WTC11 (cell line): ENCODE measurements at regions of chr11 and their contacts with region 1.

Region 1: DNA sequence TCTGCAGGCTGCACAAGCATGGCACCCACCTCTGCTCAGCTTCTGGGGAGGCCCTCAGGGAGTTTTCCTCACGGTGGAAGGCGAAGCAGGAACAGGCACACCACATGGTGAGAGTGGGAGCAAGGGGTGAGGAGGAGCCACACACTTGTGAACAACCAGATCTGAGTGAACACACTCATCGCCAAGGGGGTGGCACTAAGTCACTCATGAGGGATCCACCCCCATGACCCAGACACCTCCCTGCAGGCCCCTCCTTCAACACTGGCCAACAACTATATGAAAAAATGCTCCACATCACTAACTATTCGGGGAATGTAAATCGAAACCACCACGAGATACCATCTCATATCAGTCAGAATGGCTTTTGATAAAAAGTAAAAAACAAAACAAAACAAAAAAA is 722 bp upstream of the KRTAP5-2 start:
- DNase-seq: no peak
- ATAC-seq: no peak
- H3K4me3 Mint-ChIP-seq: no peak overlapping the region
- H3K27ac Mint-ChIP-seq: no peak overlapping the region
- H3K4me1 Mint-ChIP-seq: peaks cover 35% of the 10 kb centered on the region
- H3K27me3 Mint-ChIP-seq: peaks cover 57% of the 10 kb centered on the region
- CTCF ChIP-seq: no peak

Region 2: GRCh38 chr11:1553808-1554594 is 44.8 kb before region 1 on chr11:
- CTCF ChIA-PET with region 1: interaction called, 29 read pairs
- POLR2A ChIA-PET with region 1: interaction called, 7 read pairs
- DNase-seq: peak; percentile 82
- ATAC-seq: peak; percentile 90
- H3K4me3 Mint-ChIP-seq: no peak overlapping the region
- H3K27ac Mint-ChIP-seq: no peak overlapping the region
- H3K4me1 Mint-ChIP-seq: peaks cover 21% of the 10 kb centered on the region
- H3K27me3 Mint-ChIP-seq: peaks cover 78% of the 10 kb centered on the region
- CTCF ChIP-seq: no peak

Region 3: DNA sequence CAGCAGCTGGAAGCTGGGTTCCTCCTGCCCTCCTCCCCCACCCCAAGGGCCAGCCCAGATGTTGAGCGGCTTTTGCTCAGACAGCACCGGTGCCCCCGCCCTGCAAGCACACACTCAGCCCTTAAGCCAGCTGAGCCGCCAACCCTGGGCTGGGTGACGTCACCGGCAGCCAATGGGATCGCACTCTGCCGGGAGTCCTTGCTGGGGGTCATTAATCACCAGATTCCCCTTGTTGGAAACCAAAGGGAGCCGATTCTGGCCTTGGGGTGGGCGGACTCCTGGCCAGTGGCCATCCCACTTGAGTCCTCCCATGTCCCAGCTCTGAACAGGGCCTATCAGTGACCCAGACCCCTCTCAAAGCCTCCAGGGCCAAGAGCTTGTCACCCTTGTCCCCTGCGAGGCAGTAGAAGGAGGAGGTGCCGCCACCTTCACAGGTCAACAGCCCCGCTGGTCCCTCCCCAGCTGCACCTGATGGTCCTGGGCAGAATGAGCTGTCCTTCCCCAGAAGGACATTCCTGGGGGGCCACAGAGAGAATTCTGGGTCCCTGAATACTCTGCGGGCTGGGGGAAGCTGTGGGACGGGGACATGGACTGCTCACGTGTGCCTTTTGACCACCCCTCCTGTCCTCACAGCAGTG is 34.2 kb before region 1 on chr11:
- CTCF ChIA-PET with region 1: interaction called, 11 read pairs
- POLR2A ChIA-PET with region 1: no interaction called
- DNase-seq: peak; percentile 80
- ATAC-seq: peak; percentile 70
- H3K4me3 Mint-ChIP-seq: no peak overlapping the region
- H3K27ac Mint-ChIP-seq: no peak overlapping the region
- H3K4me1 Mint-ChIP-seq: peaks cover 13% of the 10 kb centered on the region
- H3K27me3 Mint-ChIP-seq: peaks cover 26% of the 10 kb centered on the region
- CTCF ChIP-seq: no peak

Region 4: DNA sequence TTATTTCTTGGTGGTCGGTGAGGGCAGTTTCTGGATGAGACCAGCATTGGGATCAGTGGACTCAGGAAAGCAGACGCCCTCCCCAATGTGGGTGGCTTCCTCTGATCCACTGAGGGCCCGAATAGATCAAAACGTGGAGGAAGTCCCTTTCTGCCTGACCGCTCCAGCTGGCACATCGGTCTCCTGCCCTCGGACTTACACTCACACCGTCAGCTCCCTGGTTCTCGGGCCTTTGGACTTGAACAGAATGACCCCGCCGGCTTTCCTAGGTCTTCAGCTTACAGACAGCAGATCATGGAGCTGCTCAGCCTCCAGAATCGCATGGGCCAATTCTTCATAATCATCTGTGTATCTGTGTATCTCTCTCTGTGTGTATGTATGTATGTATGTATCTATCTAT is 14.7 kb after region 1 on chr11:
- CTCF ChIA-PET with region 1: interaction called, 17 read pairs
- POLR2A ChIA-PET with region 1: no interaction called
- DNase-seq: no peak
- ATAC-seq: no peak
- H3K4me3 Mint-ChIP-seq: no peak overlapping the region
- H3K27ac Mint-ChIP-seq: no peak overlapping the region
- H3K4me1 Mint-ChIP-seq: 0 out of 2 replicates have a peak, but pooled peaks cover 2% of the 10 kb centered on the region
- H3K27me3 Mint-ChIP-seq: peaks cover 34% of the 10 kb centered on the region
- CTCF ChIP-seq: no peak

Region 5: DNA sequence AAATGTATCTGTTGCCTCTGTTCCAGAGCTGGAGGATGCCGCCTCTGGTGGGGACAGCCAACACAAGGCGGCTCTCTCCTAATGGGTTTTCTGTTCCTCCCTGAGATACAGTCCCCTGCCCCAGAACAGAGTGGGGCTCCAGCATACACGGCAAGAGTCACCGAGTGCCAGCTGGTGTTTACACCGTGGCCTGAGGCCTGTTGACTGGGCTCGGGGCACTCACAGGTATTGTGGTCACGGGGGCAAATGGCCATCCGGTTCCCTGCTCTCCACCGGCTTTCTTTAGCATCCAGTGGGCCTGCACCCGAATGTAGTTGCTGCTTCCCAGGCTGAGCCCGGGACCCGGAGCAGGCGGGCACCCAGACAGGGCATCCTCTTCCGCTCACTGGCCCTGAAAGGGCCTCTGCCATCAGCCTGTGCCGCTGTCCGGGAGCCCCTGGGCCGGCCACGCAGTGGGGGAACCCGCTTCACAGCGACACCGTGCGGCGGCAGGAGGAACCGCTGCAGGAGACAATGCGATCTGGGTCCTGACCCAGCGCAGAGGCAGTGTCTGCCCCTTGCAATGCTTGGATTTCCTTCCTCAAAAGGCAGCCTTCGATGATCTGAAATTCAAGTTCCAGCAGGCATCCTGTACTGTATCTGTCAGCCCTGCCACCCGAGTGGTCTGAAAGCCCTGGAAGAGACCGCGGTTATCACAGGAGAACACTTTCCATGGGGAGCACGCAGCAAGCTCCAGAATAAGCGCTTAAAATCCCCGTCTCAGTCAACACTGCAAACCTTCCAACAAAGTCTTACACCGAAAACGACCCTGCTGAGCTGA is 29.9 kb after region 1 on chr11:
- CTCF ChIA-PET with region 1: interaction called, 102 read pairs
- POLR2A ChIA-PET with region 1: no interaction called
- DNase-seq: peak; percentile 80
- ATAC-seq: peak; percentile 97
- H3K4me3 Mint-ChIP-seq: no peak overlapping the region
- H3K27ac Mint-ChIP-seq: no peak overlapping the region
- H3K4me1 Mint-ChIP-seq: peaks cover 16% of the 10 kb centered on the region
- H3K27me3 Mint-ChIP-seq: peaks cover 41% of the 10 kb centered on the region
- CTCF ChIP-seq: peak; percentile 91